HCT116 (cell line): ENCODE measurements at regions of chr16 and their contacts with region 1.

Region 1: DNA sequence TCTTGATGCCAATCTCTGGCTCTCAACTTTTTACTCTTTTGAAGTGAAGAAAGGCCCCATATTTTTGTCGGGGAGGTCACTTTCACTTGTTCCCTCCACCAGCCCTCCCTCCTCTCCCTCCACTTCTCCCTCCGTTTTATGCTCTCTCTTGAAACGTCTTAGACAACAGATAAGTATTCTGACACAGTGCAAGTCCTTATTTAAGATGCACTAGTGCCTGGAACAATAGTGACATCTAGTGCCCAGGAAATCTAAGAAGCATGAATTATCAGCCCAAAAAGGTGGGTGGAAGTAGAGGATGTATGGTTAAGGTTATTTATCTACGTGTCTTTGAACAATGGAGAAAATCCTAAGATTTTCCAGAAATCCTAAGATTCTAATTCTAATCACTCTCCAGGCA is 17.9 kb downstream of the PSME3IP1 start:
- DNase-seq: peak; percentile 36
- ATAC-seq: peak; percentile 73
- H3K4me3 ChIP-seq: no peak overlapping the region
- H3K27ac ChIP-seq: no peak overlapping the region
- H3K4me1 ChIP-seq: no peaks in the 10 kb centered on the region
- H3K27me3 ChIP-seq: no peaks in the 10 kb centered on the region
- CTCF ChIP-seq: peak; percentile 44 to 82 (median 64); a peak in 5 of 6 replicates
- POLR2A ChIP-seq: no peak
- RAD21 ChIP-seq: peak; percentile 81

Region 2: DNA sequence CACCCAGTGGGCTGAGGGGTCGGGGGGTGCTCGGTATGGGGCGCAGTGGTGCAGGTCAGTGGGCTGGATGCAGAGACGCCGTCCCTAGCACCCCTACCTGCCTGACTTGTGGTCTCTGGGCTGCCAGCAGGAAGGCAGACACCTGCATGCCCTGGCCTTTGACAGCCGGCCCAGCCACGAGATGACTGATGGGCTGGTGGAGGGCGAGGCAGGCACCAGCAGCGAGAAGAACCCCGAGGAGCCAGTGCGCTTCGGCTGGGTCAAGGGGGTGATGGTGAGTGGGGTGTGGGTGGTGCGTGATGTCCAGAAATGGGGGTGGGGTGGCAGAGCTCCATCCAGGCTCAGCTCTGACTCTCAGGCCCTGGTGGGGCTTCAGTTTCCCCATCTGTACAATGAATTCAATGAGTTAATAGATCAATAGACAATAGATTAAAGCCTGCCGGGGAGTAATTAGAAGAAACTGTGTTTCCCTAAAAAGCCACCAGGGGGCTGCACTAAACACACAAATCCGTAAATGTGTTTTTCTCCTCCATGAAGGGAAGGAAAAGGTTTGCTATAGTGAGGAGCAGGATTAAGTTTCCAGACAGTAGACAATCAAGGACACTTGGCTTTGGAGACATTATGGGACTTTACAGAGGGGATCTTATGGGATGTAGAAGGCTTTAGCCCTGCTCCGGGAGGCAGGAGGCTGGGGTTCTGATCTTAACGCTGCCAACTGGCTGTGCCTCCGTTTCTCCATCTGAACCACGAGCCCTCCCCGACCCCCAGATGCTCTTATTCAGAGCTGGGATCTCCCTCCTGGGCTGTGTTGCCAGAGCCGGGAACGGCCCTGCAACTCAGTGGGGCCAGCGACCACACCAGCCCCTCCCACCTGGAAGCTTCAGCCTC is 300.8 kb before region 1 on chr16:
- CTCF ChIA-PET with region 1: no interaction called
- POLR2A ChIA-PET with region 1: no interaction called
- RAD21 ChIA-PET with region 1: no interaction called
- intact Hi-C with region 1: loop called (anchors 2 kb)
- DNase-seq: peak; percentile 43
- ATAC-seq: peak; percentile 41
- H3K4me3 ChIP-seq: no peak overlapping the region
- H3K27ac ChIP-seq: no peak overlapping the region
- H3K4me1 ChIP-seq: peaks cover 0 to 5% of the 10 kb centered on the region in 2 experiments; a peak in 2 of 4 replicates
- H3K27me3 ChIP-seq: no peaks in the 10 kb centered on the region
- CTCF ChIP-seq: peak; percentile 64 to 84 (median 73)
- POLR2A ChIP-seq: no peak
- RAD21 ChIP-seq: peak; percentile 72

Region 3: DNA sequence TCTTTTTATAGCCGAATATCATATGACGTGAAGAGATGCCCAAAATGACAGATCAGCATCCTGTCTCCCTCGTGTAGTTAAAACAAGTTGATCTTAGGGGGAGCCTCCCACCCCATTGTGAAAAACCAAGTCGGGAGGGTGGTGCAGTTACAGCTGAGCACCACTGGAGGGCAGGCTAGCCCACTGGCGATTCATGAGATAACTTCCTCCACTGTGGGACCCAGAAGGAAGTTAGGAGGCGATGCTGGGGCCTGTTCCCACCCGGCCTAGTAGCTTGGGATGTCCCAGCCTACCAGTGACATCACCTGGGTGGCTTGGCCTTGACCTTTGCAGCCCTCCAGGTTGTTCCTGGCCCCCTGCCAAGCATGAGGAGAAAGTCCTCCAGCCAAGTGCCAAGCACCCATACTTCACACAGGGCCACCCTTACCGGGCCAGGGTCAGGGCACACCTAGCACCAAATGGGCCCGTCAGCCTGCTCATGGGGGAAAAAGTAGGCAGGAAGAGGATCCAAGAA is 83.6 kb before region 1 on chr16:
- CTCF ChIA-PET with region 1: no interaction called
- POLR2A ChIA-PET with region 1: no interaction called
- RAD21 ChIA-PET with region 1: no interaction called
- intact Hi-C with region 1: loop called (anchors 1 kb)
- DNase-seq: peak; percentile 63
- ATAC-seq: peak; percentile 90
- H3K4me3 ChIP-seq: no peak overlapping the region
- H3K27ac ChIP-seq: no peak overlapping the region
- H3K4me1 ChIP-seq: no peaks in the 10 kb centered on the region
- H3K27me3 ChIP-seq: no peaks in the 10 kb centered on the region
- CTCF ChIP-seq: peak; percentile 89 to 98 (median 98)
- POLR2A ChIP-seq: no peak
- RAD21 ChIP-seq: peak; percentile 92